Heart right ventricle (tissue), 16 donors: ENCODE measurements at regions of chrX and their contacts with region 1.

Region 1: GRCh38 chrX:115690511-115691216 is 129.7 kb downstream of the PLS3 start:
- DNase-seq: peak in 1 of 2 donors; percentile 57
- ATAC-seq: peak in 6 of 8 donors; percentile 64 to 80 (median 68)
- H3K4me3 ChIP-seq: no peak overlapping the region
- H3K27ac ChIP-seq: peak overlapping the region in 3 of 10 donors; percentile 8 to 68 (median 10)
- H3K4me1 ChIP-seq: peaks cover 0 to 7% (median 0%) of the 10 kb centered on the region in 9 donors
- H3K27me3 ChIP-seq: peaks cover 0 to 72% (median 0%) of the 10 kb centered on the region in 7 donors
- CTCF ChIP-seq: peak; percentile 61 to 89 (median 70)

Region 2: GRCh38 chrX:114450911-114451310 is 1239.8 kb before region 1 on chrX:
- intact Hi-C with region 1: no loop called
- DNase-seq: no peak
- ATAC-seq: no peak
- H3K4me3 ChIP-seq: no peak overlapping the region
- H3K27ac ChIP-seq: no peak overlapping the region
- H3K4me1 ChIP-seq: no peaks in the 10 kb centered on the region
- H3K27me3 ChIP-seq: peaks cover 0 to 44% (median 0%) of the 10 kb centered on the region in 7 donors
- CTCF ChIP-seq: no peak

Region 3: DNA sequence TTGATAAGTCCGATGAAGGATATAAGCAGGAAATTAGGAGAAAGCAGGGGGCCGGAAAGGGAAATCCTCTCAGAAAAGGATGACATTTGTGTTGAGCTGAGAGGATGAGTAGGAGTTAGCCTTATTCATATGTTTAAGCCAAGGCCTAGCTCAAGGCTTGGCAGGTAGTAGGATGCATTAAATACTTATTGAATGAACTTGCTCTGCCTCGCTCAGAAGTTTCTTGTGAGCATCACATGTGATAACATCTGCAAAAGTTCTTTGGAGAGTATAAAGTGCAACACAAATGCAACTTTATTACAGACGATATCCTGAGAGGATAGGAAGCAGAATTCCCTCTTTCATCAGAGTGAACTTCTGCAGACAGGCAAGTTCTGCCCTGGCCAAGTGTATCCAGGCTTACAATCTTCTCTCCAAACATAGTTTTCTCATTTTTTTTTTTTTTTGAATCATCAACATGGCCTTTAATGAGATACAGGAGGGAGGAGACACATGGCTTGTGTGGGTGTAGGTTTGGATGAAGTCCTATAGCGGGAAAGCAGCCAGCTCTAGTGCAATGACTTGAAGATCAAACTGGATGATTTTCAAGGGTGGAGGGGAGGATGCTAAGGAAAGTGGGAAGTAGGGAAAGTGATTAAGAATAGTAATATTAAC is 353.0 kb before region 1 on chrX:
- intact Hi-C with region 1: loop called in 3 of 10 experiments (anchors 5 kb)
- DNase-seq: peak in 1 of 2 donors; percentile 7
- ATAC-seq: peak in 4 of 8 donors; percentile 38 to 62 (median 57)
- H3K4me3 ChIP-seq: no peak overlapping the region
- H3K27ac ChIP-seq: peak overlapping the region in 3 of 10 donors; percentile 5 to 56 (median 15)
- H3K4me1 ChIP-seq: peaks cover 0 to 24% (median 0%) of the 10 kb centered on the region in 9 donors
- H3K27me3 ChIP-seq: peaks cover 0 to 51% (median 0%) of the 10 kb centered on the region in 7 donors
- CTCF ChIP-seq: no peak

Region 4: DNA sequence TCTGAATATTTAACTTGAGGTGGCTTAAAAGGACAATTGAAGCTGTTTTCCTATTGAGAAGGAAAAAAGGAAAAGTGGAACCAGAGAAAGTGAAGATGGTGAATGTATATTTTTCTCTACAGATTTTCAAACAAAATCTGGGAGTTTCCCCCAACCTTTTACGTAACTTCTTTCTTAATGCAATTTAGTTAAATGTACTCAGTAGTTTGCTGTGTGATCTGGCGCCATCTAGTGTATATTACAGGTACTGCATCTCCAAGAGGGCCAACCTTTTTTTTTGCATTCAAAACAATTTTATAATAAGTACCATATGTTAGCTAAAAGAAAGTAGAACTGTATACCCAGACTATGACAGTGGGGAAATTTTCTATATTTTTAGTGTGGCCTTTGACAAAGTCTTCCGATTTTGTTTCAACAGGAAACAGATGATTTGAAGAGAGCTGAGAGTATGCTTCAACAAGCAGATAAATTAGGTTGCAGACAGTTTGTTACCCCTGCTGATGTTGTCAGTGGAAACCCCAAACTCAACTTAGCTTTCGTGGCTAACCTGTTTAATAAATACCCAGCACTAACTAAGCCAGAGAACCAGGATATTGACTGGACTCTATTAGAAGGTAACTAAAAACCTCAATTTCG is 47.7 kb before region 1 on chrX:
- intact Hi-C with region 1: no loop called
- DNase-seq: peak in 1 of 2 donors; percentile 17
- ATAC-seq: peak in 2 of 8 donors; percentile 55 to 69
- H3K4me3 ChIP-seq: no peak overlapping the region
- H3K27ac ChIP-seq: peak overlapping the region in 6 of 10 donors; percentile 1 to 62 (median 44)
- H3K4me1 ChIP-seq: peaks cover 0 to 34% (median 2%) of the 10 kb centered on the region in 9 donors
- H3K27me3 ChIP-seq: peaks cover 0 to 66% (median 0%) of the 10 kb centered on the region in 7 donors
- CTCF ChIP-seq: peak; percentile 76 to 99 (median 82)